Right ventricle myocardium inferior (tissue), 1 donor: ENCODE measurements at regions of chr3 and their contacts with region 1.

Region 1: DNA sequence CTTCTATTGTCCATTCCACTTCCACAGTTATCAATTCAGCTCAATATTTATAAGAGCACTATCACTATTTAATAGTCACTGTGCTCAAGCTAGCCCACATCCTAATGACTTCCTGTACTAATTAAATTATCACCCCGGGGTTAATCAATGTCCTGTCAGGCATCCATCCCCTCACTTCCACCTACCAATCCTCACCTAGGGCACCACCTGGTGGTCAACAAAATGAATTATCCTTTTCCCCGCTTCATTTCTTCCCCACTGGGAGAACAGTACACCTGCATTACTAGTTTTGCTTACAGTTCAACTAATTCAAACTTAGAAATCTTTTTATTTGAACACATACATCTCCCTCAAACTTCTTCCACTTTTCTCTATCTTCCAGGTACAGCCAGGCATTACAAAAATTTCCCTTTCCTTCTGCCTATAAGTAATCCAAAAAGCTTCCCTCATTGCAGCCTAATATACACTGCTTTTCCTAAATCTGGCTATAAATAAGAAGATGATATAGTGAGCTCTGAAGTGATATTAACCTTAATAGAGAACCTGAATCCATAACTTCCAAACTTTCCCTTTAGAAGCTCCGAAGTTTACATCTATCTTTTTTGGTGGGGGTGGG is 68.5 kb downstream of the TMCC1 start:
- DNase-seq: no peak
- ATAC-seq: no peak

Region 2: GRCh38 chr3:129383292-129383860 is 441.7 kb before region 1 on chr3:
- intact Hi-C with region 1: loop called (anchors 5 kb)
- DNase-seq: peak; percentile 52
- ATAC-seq: peak; percentile 85

Region 3: DNA sequence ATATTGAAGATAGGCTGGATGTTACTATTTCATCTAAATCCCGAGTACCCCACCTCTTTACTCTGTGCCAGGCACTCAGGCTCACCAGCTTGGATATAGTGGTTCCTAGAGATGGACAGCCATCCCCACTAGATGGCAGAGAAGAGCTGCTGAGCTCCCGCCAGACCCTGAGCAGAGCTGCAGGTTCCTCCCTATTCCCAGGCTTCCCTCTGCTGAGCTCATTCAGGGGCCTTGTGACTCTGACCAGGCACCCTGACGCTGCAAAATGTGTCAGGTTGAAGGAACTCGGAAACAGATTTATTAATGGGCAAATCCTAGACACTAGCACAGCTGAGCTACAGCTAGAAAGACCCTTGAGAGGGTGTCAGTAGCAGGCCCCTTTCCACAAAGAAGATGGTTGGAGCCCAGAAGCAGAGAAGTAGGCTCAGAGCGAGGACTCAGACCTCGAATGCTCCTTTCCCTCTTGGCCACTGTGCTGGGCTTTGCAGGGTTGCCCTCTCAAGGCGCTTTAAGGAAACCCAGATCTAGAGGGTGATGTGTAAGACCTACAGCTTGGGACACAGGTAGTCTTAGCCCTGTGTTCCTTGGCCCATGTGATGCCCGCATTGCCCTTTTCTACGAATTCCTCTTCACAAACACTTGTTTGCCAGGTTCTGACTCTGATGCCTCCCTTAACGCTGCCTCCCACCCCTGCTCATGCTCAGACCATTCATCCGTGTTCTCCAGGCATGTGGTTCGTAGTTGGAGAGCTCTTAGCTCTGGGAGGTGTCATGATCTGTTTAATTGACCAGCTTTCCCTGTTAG is 334.6 kb before region 1 on chr3:
- intact Hi-C with region 1: loop called (anchors 2 kb)
- DNase-seq: peak; percentile 85
- ATAC-seq: peak; percentile 95

Region 4: GRCh38 chr3:129650256-129650872 is 174.7 kb before region 1 on chr3:
- intact Hi-C with region 1: loop called (anchors 1 kb)
- DNase-seq: no peak
- ATAC-seq: peak; percentile 80

Region 5: DNA sequence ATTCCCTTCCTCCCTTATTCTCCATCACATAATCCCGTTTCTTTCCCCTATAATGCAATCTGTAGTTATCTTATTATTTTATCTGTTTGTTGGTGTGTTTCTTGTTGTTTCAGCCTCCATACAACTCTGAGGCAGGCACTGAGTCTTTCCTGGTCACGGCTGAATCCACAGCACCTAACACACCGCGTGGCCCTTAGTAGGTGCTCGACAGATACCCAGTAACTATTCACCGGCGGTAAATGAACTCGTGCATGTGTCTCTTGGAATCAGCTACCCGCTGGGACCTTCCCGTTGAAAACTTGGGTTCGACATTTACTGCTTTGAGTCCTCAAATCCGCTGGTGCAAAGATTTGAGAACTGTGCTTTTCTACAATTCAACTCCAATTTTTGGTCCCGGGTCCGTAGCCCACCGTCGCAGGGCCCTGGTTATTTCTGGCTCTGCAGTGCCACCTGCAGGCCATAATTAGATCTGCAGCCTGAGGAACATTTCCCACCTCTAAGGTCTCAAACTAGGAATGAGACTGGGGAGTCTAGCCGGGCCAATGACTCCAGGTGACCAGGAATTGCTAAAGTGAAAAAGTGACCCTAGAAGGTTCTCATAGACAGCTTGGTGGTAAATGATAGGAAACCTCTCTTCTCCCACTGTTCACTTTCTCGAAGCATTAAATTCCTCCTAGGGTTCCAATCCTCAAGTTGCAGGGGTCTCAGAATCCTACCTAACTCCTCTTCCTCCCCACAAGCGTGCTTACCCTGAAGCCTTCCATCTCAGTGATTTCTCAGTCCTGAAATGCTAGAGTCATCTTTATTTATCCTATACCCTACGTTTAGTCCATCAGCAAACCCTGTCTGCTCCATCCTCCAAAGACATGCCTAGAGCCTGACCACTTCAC is 109.4 kb after region 1 on chr3:
- intact Hi-C with region 1: loop called (anchors 10 kb)
- DNase-seq: no peak
- ATAC-seq: no peak